HCT116 (cell line): ENCODE measurements at regions of chr10 and their contacts with region 1.

Region 1: GRCh38 chr10:95693668-95694534 is at the start of gene TCTN3:
- DNase-seq: peak; percentile 99
- ATAC-seq: peak; percentile 96
- H3K4me3 ChIP-seq: peak within 1 kb of the TSS; percentile 89 to 94
- H3K27ac ChIP-seq: peak within 1 kb of the TSS; percentile 64
- H3K4me1 ChIP-seq: peaks cover 5 to 12% of the 10 kb centered on the region in 2 experiments; a peak in 2 of 4 replicates
- H3K27me3 ChIP-seq: no peaks in the 10 kb centered on the region
- CTCF ChIP-seq: peak; percentile 95 to 99 (median 99)
- POLR2A ChIP-seq: peak; percentile 59
- RAD21 ChIP-seq: peak; percentile 98
- total RNA-seq, gene TCTN3: 41.7 TPM

Region 2: GRCh38 chr10:95675403-95676112 is 18.3 kb before region 1 on chr10:
- CTCF ChIA-PET with region 1: interaction called, 22 read pairs
- POLR2A ChIA-PET with region 1: interaction called, 4 read pairs
- RAD21 ChIA-PET with region 1: no interaction called
- intact Hi-C with region 1: no loop called
- DNase-seq: no peak
- ATAC-seq: peak; percentile 81
- H3K4me3 ChIP-seq: peak overlapping the region in 1 of 2 experiments; percentile 10; a peak in 1 of 4 replicates
- H3K27ac ChIP-seq: peak overlapping the region; percentile 47; the same call in 1 of the 2 replicates
- H3K4me1 ChIP-seq: peaks cover 20 to 22% of the 10 kb centered on the region in 2 experiments
- H3K27me3 ChIP-seq: no peaks in the 10 kb centered on the region
- CTCF ChIP-seq: no peak
- POLR2A ChIP-seq: no peak
- RAD21 ChIP-seq: 0 out of 2 replicates have a peak, but pooled peaks have one; percentile 2

Region 3: GRCh38 chr10:95841661-95842498 is 148.0 kb after region 1 on chr10:
- CTCF ChIA-PET with region 1: interaction called, 105 read pairs
- POLR2A ChIA-PET with region 1: interaction called, 6 read pairs
- RAD21 ChIA-PET with region 1: interaction called, 8 read pairs
- intact Hi-C with region 1: loop called (anchors 1 kb)
- DNase-seq: peak; percentile 50
- ATAC-seq: peak; percentile 80
- H3K4me3 ChIP-seq: no peak overlapping the region
- H3K27ac ChIP-seq: no peak overlapping the region
- H3K4me1 ChIP-seq: no peaks in the 10 kb centered on the region
- H3K27me3 ChIP-seq: 0 out of 2 replicates have a peak, but pooled peaks cover 6% of the 10 kb centered on the region
- CTCF ChIP-seq: peak; percentile 52 to 89 (median 88)
- POLR2A ChIP-seq: no peak
- RAD21 ChIP-seq: peak; percentile 78

Region 4: GRCh38 chr10:95864906-95865813 is 171.3 kb after region 1 on chr10:
- CTCF ChIA-PET with region 1: interaction called, 38 read pairs
- POLR2A ChIA-PET with region 1: interaction called, 7 read pairs
- RAD21 ChIA-PET with region 1: interaction called, 6 to 7 read pairs
- intact Hi-C with region 1: loop called (anchors 1 kb)
- DNase-seq: peak; percentile 48
- ATAC-seq: peak; percentile 98
- H3K4me3 ChIP-seq: no peak overlapping the region
- H3K27ac ChIP-seq: no peak overlapping the region
- H3K4me1 ChIP-seq: no peaks in the 10 kb centered on the region
- H3K27me3 ChIP-seq: no peaks in the 10 kb centered on the region
- CTCF ChIP-seq: peak; percentile 76 to 81 (median 78)
- POLR2A ChIP-seq: no peak
- RAD21 ChIP-seq: peak; percentile 80

Region 5: DNA sequence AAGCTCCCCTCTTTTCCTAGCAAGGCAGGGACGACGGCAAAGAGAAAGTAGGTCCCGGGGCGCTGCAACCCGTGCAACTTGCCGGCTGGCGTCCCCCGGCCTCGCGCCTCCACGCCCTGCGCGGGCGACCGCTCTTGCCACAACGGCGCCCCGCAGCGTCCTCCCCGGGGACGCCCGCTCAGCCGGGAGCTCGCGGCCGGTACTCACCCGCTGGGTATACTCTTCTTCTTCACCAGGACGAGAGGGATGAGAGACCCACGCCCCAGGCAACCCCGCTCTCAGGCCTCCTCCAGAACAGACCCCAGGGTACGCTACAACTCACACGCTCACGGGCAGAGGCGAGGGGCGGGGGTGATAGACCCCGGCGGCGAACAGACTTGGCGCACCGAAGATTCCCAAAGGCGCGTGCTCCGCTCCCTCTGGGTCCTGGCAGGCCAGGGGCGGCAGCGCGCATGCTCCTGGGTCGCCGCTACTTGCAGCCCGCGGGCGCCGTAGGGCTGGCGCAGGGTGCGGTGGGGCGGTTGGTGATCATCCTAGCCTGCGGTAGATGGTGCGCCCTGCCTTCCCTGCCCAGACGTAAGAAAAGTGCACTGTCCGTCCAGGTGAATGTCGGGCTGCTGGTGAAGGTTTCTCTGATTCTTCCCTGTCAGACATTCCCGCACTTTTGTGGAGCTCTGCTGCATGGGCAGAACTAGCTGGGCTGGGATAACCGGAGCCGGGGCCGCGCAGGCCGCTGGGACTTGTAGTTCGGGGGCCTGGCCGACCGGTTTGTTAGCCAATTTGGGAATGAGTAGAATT is 213.8 kb after region 1 on chr10 and contains the start of gene CC2D2B:
- CTCF ChIA-PET with region 1: interaction called, 6 read pairs
- POLR2A ChIA-PET with region 1: interaction called, 3 read pairs
- RAD21 ChIA-PET with region 1: interaction called in 1 of 2 experiments, 4 read pairs
- intact Hi-C with region 1: loop called (anchors 1 kb)
- DNase-seq: peak; percentile 61
- ATAC-seq: peak; percentile 95
- H3K4me3 ChIP-seq: peak within 1 kb of the TSS; percentile 63 to 66
- H3K27ac ChIP-seq: peak within 1 kb of the TSS; percentile 68
- H3K4me1 ChIP-seq: peaks cover 0 to 19% of the 10 kb centered on the region in 2 experiments; a peak in 1 of 4 replicates
- H3K27me3 ChIP-seq: no peaks in the 10 kb centered on the region
- CTCF ChIP-seq: no peak
- POLR2A ChIP-seq: peak; percentile 80
- RAD21 ChIP-seq: no peak
- total RNA-seq, gene CC2D2B: 0.20 TPM